GM18951 (cell line): ENCODE measurements at regions of chr4 and their contacts with region 1.

Region 1: DNA sequence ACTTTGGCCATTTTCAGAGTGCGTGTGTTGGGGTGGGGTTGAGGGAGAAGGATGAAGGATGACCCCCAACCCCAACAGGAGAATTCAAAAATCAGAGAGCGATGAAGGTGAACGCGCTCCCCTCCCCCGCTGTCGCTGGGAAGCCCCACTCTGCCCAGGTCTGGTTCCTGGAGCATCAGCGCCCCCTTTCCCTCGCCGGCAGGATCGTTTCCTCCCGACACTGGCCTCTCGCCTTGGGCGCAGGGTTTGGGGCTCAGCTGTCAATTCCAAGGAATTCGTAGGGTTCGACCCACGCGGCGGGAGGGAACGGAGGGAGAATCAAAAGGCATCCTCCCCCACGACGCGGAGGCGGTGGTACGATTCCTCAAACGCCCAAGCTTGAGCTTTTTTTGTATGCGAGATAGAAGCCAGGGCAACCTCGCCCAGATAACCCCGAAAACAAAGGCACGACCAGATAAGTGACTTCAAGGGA is 1.0 kb upstream of the PDGFRA start:
- POLR2A ChIP-seq: no peak

Region 2: GRCh38 chr4:53676402-53676871 is 551.7 kb before region 1 on chr4:
- in situ Hi-C with region 1: no loop called
- POLR2A ChIP-seq: no peak

Region 3: GRCh38 chr4:53929955-53930798 is 297.9 kb before region 1 on chr4:
- in situ Hi-C with region 1: loop called (anchors 10 kb)
- POLR2A ChIP-seq: no peak